Common myeloid progenitor, CD34-positive (primary cell): ENCODE measurements at regions of chr2 and their contacts with region 1.

Region 1: DNA sequence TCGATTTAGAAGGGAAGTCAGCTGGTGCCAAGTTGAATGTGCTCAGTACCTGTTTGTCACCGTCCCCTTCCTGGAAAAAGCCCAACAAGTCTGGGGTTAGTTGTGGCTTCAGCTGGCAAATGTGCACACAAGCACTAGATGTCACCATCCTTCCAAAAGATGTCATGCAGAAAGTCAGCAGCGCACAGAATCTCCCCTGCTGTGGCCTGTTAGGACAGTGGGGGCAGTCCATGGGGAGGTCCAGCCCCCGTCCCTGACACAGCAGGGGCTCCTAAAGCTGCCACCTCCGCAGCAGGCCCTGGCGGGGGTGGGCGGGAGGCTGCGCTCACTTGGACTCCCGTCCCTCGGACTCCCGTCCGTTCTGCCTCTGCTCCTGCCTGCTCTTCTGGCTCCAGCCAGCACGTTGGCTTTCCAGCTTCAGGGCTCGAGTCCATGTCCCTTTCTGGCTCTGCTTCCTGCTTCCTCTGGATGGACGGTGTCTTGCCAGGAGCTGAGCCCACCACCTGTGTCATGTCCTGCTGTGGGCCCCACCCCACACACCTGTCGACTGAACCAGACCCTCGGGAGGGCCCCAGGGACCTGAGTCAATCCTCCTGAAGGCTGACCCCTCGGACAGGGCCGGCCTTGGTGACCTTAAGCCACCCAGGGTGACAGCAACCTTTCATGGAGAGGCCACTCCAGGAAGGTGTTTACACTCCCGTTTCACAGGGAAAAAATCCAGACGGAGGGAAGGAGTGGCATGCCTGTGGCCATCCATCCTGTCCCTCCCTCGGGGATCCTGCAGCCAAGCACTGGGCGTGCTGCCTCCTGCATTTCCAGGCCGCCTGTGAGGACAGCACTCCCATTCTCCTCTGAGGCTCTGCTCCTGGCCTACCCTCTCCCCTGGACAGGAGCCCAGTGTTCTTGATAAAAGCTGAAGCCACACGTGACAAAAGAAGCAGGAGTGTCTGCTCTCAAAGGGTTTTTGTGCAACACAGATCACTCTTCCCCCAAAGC is 8.5 kb downstream of the RAB17 start:
- DNase-seq: peak; percentile 85 to 92 (median 92)
- H3K4me3 ChIP-seq: peak overlapping the region in 1 of 7 experiments; percentile 46
- H3K27ac ChIP-seq: no peak overlapping the region
- H3K4me1 ChIP-seq: peaks cover 0 to 12% (median 8%) of the 10 kb centered on the region in 4 experiments
- H3K27me3 ChIP-seq: no peaks in the 10 kb centered on the region

Region 2: GRCh38 chr2:237254911-237255578 is 327.0 kb before region 1 on chr2:
- CTCF ChIA-PET with region 1: no interaction called
- POLR2A ChIA-PET with region 1: no interaction called
- DNase-seq: no peak
- H3K4me3 ChIP-seq: no peak overlapping the region
- H3K27ac ChIP-seq: no peak overlapping the region
- H3K4me1 ChIP-seq: peaks cover 0 to 22% (median 10%) of the 10 kb centered on the region in 4 experiments
- H3K27me3 ChIP-seq: peaks cover 0 to 2% (median 0%) of the 10 kb centered on the region in 5 experiments

Region 3: DNA sequence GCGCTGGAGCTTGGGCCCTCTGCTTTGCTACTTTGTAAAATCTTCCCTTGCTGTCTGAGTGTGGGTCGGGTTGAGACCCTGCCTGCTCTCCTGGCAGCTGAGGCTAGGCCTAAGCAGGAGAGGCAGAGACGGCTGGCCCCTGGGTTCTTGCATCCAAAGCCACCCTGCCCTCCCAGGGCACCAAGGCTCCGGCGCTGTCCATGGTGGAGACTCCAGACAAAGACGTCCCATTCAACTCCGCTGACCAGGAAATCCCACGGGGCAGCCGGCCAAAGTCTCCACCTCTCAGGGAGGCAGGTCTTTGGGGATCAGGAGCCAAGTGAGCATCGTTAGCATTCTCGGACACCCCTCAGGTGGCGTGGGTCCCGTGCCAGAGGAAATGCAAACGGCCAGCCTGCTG is 18.2 kb before region 1 on chr2:
- CTCF ChIA-PET with region 1: no interaction called
- POLR2A ChIA-PET with region 1: no interaction called
- DNase-seq: peak in 2 of 3 donors; percentile 8 to 14
- H3K4me3 ChIP-seq: no peak overlapping the region
- H3K27ac ChIP-seq: no peak overlapping the region
- H3K4me1 ChIP-seq: no peaks in the 10 kb centered on the region
- H3K27me3 ChIP-seq: peaks cover 0 to 16% (median 3%) of the 10 kb centered on the region in 5 experiments

Region 4: DNA sequence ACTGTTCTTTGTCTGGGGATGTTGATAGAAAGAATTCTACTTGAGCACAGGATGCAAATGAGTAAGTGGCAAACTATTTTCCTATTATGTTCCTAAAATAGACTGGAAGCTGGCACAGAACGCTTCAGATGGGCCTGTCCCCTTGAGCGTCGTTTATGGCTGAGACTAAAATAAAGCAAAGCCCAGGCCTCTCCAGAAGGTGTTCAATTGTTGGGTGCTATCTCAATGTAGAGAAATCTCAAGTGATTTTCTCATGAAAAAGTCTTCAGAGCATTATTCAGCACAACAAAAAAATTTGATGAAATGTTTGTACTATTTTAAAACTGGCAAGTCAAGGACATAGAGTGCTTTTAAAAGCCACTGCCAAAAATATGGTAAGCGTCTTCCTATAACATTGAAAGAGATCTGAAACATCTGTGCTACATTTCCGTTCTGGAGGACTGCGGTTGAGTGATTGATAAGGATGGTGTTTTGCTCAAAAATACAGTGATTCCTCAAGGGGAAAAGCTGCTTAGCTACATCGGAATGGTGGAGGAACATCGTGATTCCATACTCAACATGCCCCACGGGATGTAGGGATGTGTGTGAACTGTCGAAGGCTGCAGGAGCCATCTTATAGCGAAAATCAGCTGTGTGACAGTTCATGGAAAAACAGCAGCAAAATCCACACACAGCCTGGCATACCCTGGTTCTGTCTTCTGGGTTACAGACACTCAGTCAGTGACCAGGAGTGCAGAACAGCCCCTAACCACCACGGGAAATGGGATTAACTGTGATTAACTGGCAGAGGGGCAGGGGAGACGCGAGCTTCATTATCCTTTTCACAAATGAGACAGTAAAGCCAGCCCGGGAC is 34.9 kb after region 1 on chr2:
- CTCF ChIA-PET with region 1: interaction called, 10 read pairs
- POLR2A ChIA-PET with region 1: no interaction called
- DNase-seq: peak; percentile 88 to 97 (median 94)
- H3K4me3 ChIP-seq: peak overlapping the region in 3 of 7 experiments; percentile 21 to 62 (median 29)
- H3K27ac ChIP-seq: no peak overlapping the region
- H3K4me1 ChIP-seq: peaks cover 31 to 58% (median 52%) of the 10 kb centered on the region in 4 experiments
- H3K27me3 ChIP-seq: no peaks in the 10 kb centered on the region

Region 5: GRCh38 chr2:237662671-237663093 is 80.6 kb after region 1 on chr2:
- CTCF ChIA-PET with region 1: interaction called, 29 read pairs
- POLR2A ChIA-PET with region 1: no interaction called
- DNase-seq: peak; percentile 89 to 97 (median 97)
- H3K4me3 ChIP-seq: peak overlapping the region in 3 of 7 experiments; percentile 39 to 66 (median 40)
- H3K27ac ChIP-seq: no peak overlapping the region
- H3K4me1 ChIP-seq: peaks cover 0 to 24% (median 14%) of the 10 kb centered on the region in 4 experiments
- H3K27me3 ChIP-seq: peaks cover 0 to 2% (median 0%) of the 10 kb centered on the region in 5 experiments

Region 6: GRCh38 chr2:237744613-237745249 is 162.7 kb after region 1 on chr2:
- CTCF ChIA-PET with region 1: interaction called, 86 read pairs
- POLR2A ChIA-PET with region 1: interaction called, 4 read pairs
- DNase-seq: peak; percentile 60 to 72 (median 68)
- H3K4me3 ChIP-seq: no peak overlapping the region
- H3K27ac ChIP-seq: no peak overlapping the region
- H3K4me1 ChIP-seq: peaks cover 0 to 28% (median 9%) of the 10 kb centered on the region in 4 experiments
- H3K27me3 ChIP-seq: no peaks in the 10 kb centered on the region